ENCODE measurements at regions of chr1 and their contacts with region 1.

Region 1: DNA sequence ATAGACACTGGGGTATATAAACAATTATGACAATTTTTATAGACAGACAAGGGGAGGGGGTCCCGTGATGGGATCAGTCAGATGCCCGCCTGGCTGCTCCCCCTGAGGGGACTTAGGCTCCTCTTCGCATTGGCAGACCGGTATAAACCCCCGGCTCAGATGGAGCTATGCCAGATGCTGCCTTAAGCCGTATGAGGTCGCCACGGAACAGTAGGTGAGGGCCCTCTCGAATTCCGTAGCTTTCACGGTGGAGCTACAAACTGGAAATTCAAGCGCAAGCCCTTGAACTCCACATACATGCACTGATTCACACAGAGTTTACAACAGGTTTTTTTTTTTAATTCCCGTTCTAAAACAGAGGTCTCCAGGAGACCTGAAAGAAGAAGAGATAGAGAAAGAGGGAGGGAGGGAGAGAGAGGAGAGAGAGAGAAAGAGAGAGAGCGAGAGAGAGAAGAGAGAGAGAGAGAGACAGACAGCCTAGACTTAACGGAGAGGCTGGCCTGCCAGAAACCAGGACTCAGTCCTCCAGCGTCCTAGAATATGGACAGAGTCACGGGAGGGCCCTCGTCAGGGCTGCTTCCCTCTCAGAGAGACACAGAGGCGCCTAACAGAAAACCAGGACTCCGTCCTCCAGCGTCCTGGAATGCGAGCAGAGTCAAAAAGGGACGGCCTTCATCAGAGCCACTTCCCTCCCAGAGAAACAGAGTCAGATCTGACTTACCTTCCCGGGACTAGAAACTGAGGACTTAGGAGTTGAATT is 24.4 kb upstream of the TMEM54 start:
- DNase-seq: no peak
- H3K4me3 ChIP-seq: no peak overlapping the region
- H3K27ac ChIP-seq: no peak overlapping the region
- H3K4me1 ChIP-seq: no peaks in the 10 kb centered on the region
- H3K27me3 ChIP-seq: no peaks in the 10 kb centered on the region
- CTCF ChIP-seq: no peak

Region 2: GRCh38 chr1:32702599-32703478 is 222.7 kb before region 1 on chr1 and contains the start of gene SYNC:
- CTCF ChIA-PET with region 1: no interaction called
- dilution Hi-C with region 1: no loop called
- in situ Hi-C with region 1: no loop called
- intact Hi-C with region 1: no loop called
- DNase-seq: no peak
- H3K4me3 ChIP-seq: peak within 1 kb of the TSS; percentile 59 to 78 (median 68)
- H3K27ac ChIP-seq: no peak within 1 kb of the TSS
- H3K4me1 ChIP-seq: peaks cover 27% of the 10 kb centered on the region
- H3K27me3 ChIP-seq: no peaks in the 10 kb centered on the region
- CTCF ChIP-seq: no peak
- total RNA-seq, gene SYNC: 9.2 to 60.0 TPM

Region 3: GRCh38 chr1:33072707-33073106 is 147.1 kb after region 1 on chr1:
- CTCF ChIA-PET with region 1: no interaction called
- dilution Hi-C with region 1: no loop called
- in situ Hi-C with region 1: loop called (anchors 10 to 25 kb)
- intact Hi-C with region 1: no loop called
- DNase-seq: no peak
- H3K4me3 ChIP-seq: no peak overlapping the region
- H3K27ac ChIP-seq: no peak overlapping the region
- H3K4me1 ChIP-seq: peaks cover 9% of the 10 kb centered on the region
- H3K27me3 ChIP-seq: no peaks in the 10 kb centered on the region
- CTCF ChIP-seq: no peak

Measured in mammary epithelial cell (primary cell).